Colonic mucosa (tissue), 4 donors: ENCODE measurements at regions of chr4 and their contacts with region 1.

Region 1: GRCh38 chr4:70839589-70840093 is at the start of gene GRSF1:
- DNase-seq: peak; percentile 97
- H3K4me3 ChIP-seq: peak within 1 kb of the TSS; percentile 78
- H3K27ac ChIP-seq: peak within 1 kb of the TSS; percentile 86
- H3K4me1 ChIP-seq: no peaks in the 10 kb centered on the region
- H3K27me3 ChIP-seq: no peaks in the 10 kb centered on the region
- CTCF ChIP-seq: no peak
- total RNA-seq, gene GRSF1: 91.0 to 108 TPM

Region 2: DNA sequence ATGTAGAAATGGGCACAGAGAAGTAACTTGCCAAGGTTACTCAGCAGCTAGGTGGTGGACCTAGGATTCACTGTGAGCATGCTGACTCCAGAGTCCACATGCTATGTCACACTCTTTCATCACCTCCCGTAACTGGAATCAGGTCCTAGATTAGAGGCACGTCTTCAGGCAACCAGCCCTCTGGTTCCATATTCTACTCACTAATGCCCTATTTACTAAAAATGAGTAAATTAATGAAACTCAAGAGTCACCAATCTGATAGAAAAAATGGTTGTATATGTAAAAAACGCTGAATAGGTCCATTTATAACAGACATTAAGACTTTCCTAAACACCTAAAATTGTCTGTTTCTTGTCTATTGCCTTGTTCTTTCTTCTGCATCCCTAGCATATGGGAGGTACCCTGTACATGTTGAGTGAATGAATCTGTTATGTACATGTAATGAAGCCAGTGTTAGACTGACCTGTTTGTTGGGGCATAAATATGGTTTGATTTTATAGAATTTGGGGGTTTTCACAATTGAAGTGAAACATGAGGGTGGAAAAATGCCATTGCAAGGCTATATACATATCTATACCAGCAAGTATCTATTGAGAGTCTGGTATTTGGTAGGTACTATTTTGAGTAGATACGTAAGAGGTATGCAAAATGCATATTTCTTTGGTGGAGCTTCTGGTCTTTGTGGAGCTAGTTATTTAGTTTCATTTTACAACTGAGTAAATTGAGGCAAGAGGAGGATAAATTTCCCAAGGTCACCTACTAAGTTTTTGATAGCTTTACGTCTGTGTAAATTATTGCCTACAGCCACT is 125.4 kb before region 1 on chr4:
- intact Hi-C with region 1: loop called (anchors 10 kb)
- DNase-seq: no peak
- H3K4me3 ChIP-seq: no peak overlapping the region
- H3K27ac ChIP-seq: no peak overlapping the region
- H3K4me1 ChIP-seq: no peaks in the 10 kb centered on the region
- H3K27me3 ChIP-seq: no peaks in the 10 kb centered on the region
- CTCF ChIP-seq: no peak

Region 3: DNA sequence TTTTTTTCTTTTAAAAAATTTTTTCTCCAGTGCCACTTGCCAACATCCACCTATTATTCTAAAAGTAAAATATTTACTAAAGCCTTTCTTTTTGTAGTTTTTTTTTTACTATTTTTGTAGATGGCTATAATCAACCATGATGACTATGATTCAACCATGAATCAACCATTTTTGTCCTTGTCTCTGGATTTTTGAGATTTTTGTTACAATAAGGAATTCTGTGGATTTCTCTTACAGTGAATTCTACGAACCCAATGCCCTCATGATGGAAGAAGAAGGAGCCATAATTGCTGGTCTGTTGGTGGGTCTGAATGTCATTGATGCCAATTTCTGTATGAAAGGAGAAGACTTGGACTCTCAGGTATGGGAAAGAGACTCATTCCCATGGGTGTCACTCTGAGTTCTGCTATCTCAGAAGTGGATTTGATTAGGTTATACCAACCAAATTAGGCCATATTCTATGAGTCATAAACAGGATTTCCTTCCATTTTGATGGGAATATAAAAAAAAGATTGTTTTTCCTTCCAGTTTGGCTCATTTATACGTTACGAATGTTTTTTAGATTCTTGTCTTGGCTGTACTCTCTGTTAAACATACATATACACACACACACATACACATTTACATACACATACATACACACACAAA is 71.2 kb before region 1 on chr4:
- intact Hi-C with region 1: no loop called
- DNase-seq: no peak
- H3K4me3 ChIP-seq: no peak overlapping the region
- H3K27ac ChIP-seq: no peak overlapping the region
- H3K4me1 ChIP-seq: no peaks in the 10 kb centered on the region
- H3K27me3 ChIP-seq: no peaks in the 10 kb centered on the region
- CTCF ChIP-seq: no peak

Region 4: GRCh38 chr4:70993181-70994068 is 153.8 kb after region 1 on chr4 and contains the start of gene DCK:
- intact Hi-C with region 1: loop called (anchors 5 kb)
- DNase-seq: peak; percentile 94
- H3K4me3 ChIP-seq: peak within 1 kb of the TSS; percentile 83
- H3K27ac ChIP-seq: peak within 1 kb of the TSS; percentile 83
- H3K4me1 ChIP-seq: no peaks in the 10 kb centered on the region
- H3K27me3 ChIP-seq: no peaks in the 10 kb centered on the region
- CTCF ChIP-seq: no peak
- total RNA-seq, gene DCK: 15.0 to 19.1 TPM